ENCODE measurements at regions of chr2 and their contacts with region 1.

Region 1: GRCh38 chr2:43484323-43484930 is 111.4 kb downstream of the THADA start:
- DNase-seq: peak; percentile 15 to 85
- ATAC-seq: peak in 1 of 2 experiments; percentile 80; a peak in 3 of 6 replicates
- H3K4me3 ChIP-seq: no peak overlapping the region
- H3K27ac ChIP-seq: peak overlapping the region in 1 of 2 experiments; percentile 46; a peak in 2 of 6 replicates
- H3K4me1 ChIP-seq: peaks cover 22% of the 10 kb centered on the region
- CTCF ChIP-seq: peak; percentile 96
- EP300 ChIP-seq: no peak
- POLR2A ChIP-seq: no peak
- RAD21 ChIP-seq: peak; percentile 87 to 97

Region 2: GRCh38 chr2:42935692-42936681 is 548.4 kb before region 1 on chr2:
- CTCF ChIA-PET with region 1: interaction called, 16 read pairs
- POLR2A ChIA-PET with region 1: no interaction called
- DNase-seq: no peak
- ATAC-seq: no peak
- H3K4me3 ChIP-seq: no peak overlapping the region
- H3K27ac ChIP-seq: no peak overlapping the region
- H3K4me1 ChIP-seq: 0 out of 3 replicates have a peak, but pooled peaks cover 2% of the 10 kb centered on the region
- CTCF ChIP-seq: no peak
- EP300 ChIP-seq: no peak
- POLR2A ChIP-seq: no peak
- RAD21 ChIP-seq: no peak

Region 3: DNA sequence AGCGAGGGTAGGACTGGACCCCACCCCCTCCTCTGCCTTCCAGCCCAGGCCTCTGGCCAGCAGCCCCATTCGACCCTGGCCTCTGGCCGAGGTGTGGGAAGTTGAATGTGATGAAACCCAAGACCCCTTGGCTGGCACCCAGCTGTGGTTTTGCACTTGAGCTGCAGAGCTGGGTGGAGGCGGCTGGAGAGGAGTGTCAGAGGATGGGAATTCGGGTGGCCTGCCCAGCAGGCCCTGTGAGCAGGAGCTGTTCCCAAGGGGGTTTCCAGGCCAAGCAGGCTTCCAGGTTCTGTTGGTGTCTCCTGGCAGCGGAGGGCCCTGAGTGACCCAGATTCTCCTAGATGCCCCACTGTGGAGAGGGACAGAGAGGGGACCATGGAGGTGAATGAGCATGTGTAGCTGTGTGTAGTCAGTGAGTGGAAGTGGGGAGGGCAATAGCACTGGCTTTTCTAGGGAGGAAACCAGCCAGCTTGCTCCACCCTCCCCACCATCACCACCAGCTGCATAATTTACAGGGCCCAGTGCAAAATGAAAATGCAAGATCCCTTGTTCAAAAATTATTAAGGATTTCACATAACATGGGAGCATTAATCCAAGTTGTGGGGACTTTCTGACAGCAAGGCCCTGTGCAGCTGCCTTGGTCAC is 519.9 kb before region 1 on chr2:
- CTCF ChIA-PET with region 1: interaction called, 16 read pairs
- POLR2A ChIA-PET with region 1: no interaction called
- DNase-seq: no peak
- ATAC-seq: no peak
- H3K4me3 ChIP-seq: no peak overlapping the region
- H3K27ac ChIP-seq: no peak overlapping the region
- H3K4me1 ChIP-seq: peaks cover 3% of the 10 kb centered on the region; the same call in 2 of the 3 replicates
- CTCF ChIP-seq: no peak
- EP300 ChIP-seq: no peak
- POLR2A ChIP-seq: no peak
- RAD21 ChIP-seq: no peak

Region 4: GRCh38 chr2:43239981-43240761 is 244.3 kb before region 1 on chr2:
- CTCF ChIA-PET with region 1: interaction called, 13 read pairs
- POLR2A ChIA-PET with region 1: no interaction called
- DNase-seq: peak in 1 of 2 experiments; percentile 28
- ATAC-seq: peak; percentile 38 to 65; a peak in 4 of 6 replicates
- H3K4me3 ChIP-seq: no peak overlapping the region
- H3K27ac ChIP-seq: no peak overlapping the region
- H3K4me1 ChIP-seq: no peaks in the 10 kb centered on the region
- CTCF ChIP-seq: no peak; the same call in 2 of the 3 replicates
- EP300 ChIP-seq: no peak
- POLR2A ChIP-seq: no peak
- RAD21 ChIP-seq: peak in 1 of 2 experiments; percentile 41; a peak in 2 of 5 replicates

Region 5: DNA sequence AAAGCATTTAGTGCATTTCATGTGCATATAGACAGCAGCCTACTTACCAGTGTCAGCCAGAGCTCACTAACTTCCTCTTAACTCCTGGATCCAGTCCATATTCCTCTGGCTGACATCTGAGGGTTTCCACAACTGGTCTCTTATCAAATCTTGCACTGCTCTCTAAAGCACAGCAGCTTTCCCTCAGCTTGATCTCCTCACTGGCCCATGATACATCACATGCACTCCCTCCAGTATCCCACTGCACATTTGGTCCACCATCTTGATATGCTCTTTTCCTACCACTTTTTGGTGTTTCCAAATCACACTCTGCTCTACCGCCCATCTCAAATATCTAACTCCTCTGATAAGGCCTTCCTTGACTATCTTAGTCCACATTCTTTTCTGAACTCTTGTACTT is 153.0 kb before region 1 on chr2:
- CTCF ChIA-PET with region 1: interaction called, 10 read pairs
- POLR2A ChIA-PET with region 1: no interaction called
- DNase-seq: no peak
- ATAC-seq: no peak
- H3K4me3 ChIP-seq: no peak overlapping the region
- H3K27ac ChIP-seq: no peak overlapping the region
- H3K4me1 ChIP-seq: no peaks in the 10 kb centered on the region
- CTCF ChIP-seq: no peak
- EP300 ChIP-seq: no peak
- POLR2A ChIP-seq: no peak
- RAD21 ChIP-seq: no peak

Region 6: GRCh38 chr2:43418680-43419079 is 65.7 kb before region 1 on chr2:
- CTCF ChIA-PET with region 1: no interaction called
- POLR2A ChIA-PET with region 1: no interaction called
- DNase-seq: no peak
- ATAC-seq: no peak
- H3K4me3 ChIP-seq: no peak overlapping the region
- H3K27ac ChIP-seq: no peak overlapping the region
- H3K4me1 ChIP-seq: peaks cover 13% of the 10 kb centered on the region
- CTCF ChIP-seq: no peak
- EP300 ChIP-seq: no peak
- POLR2A ChIP-seq: no peak
- RAD21 ChIP-seq: no peak

Region 7: GRCh38 chr2:43542285-43542937 is 58.0 kb after region 1 on chr2:
- CTCF ChIA-PET with region 1: interaction called, 19 read pairs
- POLR2A ChIA-PET with region 1: no interaction called
- DNase-seq: peak; percentile 28 to 55
- ATAC-seq: peak; percentile 56 to 71; a peak in 3 of 6 replicates
- H3K4me3 ChIP-seq: no peak overlapping the region
- H3K27ac ChIP-seq: peak overlapping the region in 1 of 2 experiments; percentile 63; a peak in 1 of 6 replicates
- H3K4me1 ChIP-seq: peaks cover 29% of the 10 kb centered on the region
- CTCF ChIP-seq: peak; percentile 81
- EP300 ChIP-seq: no peak
- POLR2A ChIP-seq: no peak
- RAD21 ChIP-seq: peak; percentile 77 to 86

Region 8: DNA sequence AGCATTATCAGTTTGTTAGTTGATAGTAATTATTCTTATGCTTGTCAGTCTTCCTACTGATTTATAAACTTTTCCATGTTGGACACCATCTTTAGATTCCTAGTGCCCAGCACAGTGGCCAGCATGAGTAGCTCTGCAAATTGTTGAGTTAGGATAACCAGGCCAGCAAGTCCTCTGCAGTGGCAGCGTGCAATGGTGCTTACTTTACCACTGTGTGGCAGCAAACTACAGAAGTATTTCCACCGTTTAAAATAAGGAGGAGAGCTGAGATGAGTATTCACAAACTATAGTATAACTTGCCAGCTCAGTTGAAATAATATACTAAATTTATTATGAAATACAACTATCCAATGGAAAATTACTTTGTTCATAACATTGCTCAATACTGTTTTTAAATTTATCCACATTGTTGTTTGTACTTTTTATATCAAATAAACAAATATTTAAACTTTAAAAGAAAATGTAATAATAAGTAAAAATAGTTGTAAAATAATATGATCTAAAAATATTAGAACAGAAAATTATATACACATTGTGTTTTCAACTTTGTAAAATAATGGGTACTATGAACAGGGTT is 120.7 kb after region 1 on chr2:
- CTCF ChIA-PET with region 1: no interaction called
- POLR2A ChIA-PET with region 1: no interaction called
- DNase-seq: peak; percentile 69 to 79
- ATAC-seq: peak; percentile 93 to 95
- H3K4me3 ChIP-seq: no peak overlapping the region
- H3K27ac ChIP-seq: no peak overlapping the region
- H3K4me1 ChIP-seq: no peaks in the 10 kb centered on the region
- CTCF ChIP-seq: peak; percentile 78
- EP300 ChIP-seq: no peak
- POLR2A ChIP-seq: no peak
- RAD21 ChIP-seq: peak; percentile 66 to 69; a peak in 4 of 5 replicates